Activated T-helper 1 cell treated with anti-CD3 and anti-CD28 coated beads, Interleukin-12 subunit alpha, Interleukin-12 subunit beta, Interleukin-2, Interleukin-4 antibody, amounts not matched to agents 30 ng/mL and 10 ng/mL and 1 ng/mL, durations not matched to agents 14 hours and 24 hours and 36 hours (primary cell): ENCODE measurements at regions of chr4 and their contacts with region 1.

Region 1: DNA sequence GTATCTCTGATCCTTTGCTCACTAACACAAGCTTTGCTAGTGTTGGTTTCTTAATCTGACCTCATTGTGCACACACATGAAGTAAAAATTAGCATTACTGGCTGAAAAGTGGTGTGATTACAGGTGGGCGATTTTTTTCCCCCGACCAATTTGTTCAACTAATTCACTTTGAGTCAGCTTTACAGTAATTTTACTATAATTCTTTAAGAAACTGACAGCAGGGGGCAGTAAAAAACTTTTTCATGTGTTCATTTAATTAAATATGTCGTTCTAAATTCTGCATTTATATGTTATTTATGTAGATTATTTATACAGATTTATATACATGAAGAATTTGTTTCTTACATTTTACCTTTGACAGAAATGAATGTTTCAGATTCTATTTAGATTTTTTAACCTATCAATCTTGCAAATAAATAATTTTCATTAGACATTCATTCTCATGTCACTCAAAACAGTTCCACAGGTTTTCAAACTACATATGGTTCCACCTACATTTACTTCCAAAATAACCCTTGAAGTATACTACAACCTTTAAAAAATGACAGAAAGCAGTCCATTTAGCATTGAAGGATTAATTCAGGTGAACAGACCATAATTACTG is 17.5 kb downstream of the PALLD start:
- DNase-seq: no peak
- H3K4me3 Mint-ChIP-seq: no peak overlapping the region
- H3K27ac Mint-ChIP-seq: no peak overlapping the region
- H3K4me1 Mint-ChIP-seq: peaks cover 30% of the 10 kb centered on the region
- H3K27me3 Mint-ChIP-seq: peaks cover 16% of the 10 kb centered on the region

Region 2: GRCh38 chr4:168318266-168318895 is 196.0 kb before region 1 on chr4 and contains the start of gene DDX60:
- intact Hi-C with region 1: loop called (anchors 1 kb)
- DNase-seq: peak; percentile 85
- H3K4me3 Mint-ChIP-seq: peak within 1 kb of the TSS; percentile 90
- H3K27ac Mint-ChIP-seq: peak within 1 kb of the TSS; percentile 88
- H3K4me1 Mint-ChIP-seq: peaks cover 60% of the 10 kb centered on the region
- H3K27me3 Mint-ChIP-seq: peaks cover 1% of the 10 kb centered on the region
- total RNA-seq, gene DDX60: 10.6 and 15.2 TPM in 2 replicates

Region 3: DNA sequence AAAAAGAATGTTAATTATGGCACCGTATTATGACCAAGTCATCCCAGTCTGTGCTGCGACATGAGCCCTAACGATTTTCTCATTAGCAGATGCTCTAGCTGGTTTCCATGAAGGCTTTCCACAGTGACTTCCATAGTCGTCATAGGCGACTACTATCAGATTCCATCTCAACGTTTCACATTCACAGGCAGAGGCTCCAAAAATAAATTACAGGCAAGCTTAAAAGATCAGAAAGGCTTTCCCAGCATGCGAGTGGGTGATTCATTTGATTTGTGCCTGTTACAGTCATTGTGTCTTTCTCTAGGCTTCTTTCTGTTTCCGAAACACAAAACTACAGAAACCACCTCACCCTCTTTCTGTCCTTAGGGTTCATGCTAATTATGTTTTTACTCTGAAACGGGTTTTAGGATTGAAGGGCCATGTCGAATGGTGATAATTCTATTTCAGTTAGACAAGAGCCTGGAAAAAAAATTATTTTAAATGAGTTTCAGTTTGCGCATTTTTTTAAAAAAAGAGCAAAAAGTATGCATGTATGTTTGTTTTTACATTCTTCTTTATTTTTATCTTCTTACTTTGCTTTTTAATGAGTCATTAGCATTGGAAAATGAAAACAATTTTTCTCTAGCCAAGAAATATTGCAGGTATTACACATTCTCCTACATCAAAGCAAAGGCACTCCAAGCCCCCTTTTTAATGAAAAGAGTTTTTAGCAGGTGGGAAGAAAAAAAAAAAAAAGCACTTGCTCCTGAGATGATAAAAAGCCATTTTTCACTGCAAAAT is 25.9 kb after region 1 on chr4:
- intact Hi-C with region 1: loop called (anchors 1 kb)
- DNase-seq: no peak
- H3K4me3 Mint-ChIP-seq: no peak overlapping the region
- H3K27ac Mint-ChIP-seq: no peak overlapping the region
- H3K4me1 Mint-ChIP-seq: peaks cover 5% of the 10 kb centered on the region
- H3K27me3 Mint-ChIP-seq: peaks cover 3% of the 10 kb centered on the region

Region 4: DNA sequence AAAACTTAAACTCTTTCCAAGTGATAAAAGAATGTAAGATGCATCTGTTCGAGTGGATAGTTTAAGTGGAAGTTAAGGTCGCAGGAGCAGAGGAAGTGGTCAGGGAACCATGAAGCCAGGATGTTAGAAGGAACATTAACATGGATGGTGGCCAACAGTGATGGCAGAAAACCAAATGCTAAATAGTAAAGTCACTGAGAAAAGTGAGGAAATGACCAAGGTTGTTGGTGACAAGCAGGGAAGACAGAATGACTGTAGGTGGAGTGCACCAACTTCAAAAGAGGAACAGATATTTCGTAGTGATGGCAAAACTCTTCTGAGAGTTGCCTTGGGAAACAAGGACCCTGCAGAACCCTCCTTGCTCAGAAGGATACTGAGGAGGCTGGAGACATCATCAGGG is 208.7 kb after region 1 on chr4:
- intact Hi-C with region 1: loop called (anchors 10 kb)
- DNase-seq: no peak
- H3K4me3 Mint-ChIP-seq: peak overlapping the region; percentile 25
- H3K27ac Mint-ChIP-seq: peak overlapping the region; percentile 33
- H3K4me1 Mint-ChIP-seq: peaks cover 23% of the 10 kb centered on the region
- H3K27me3 Mint-ChIP-seq: peaks cover 4% of the 10 kb centered on the region

Region 5: DNA sequence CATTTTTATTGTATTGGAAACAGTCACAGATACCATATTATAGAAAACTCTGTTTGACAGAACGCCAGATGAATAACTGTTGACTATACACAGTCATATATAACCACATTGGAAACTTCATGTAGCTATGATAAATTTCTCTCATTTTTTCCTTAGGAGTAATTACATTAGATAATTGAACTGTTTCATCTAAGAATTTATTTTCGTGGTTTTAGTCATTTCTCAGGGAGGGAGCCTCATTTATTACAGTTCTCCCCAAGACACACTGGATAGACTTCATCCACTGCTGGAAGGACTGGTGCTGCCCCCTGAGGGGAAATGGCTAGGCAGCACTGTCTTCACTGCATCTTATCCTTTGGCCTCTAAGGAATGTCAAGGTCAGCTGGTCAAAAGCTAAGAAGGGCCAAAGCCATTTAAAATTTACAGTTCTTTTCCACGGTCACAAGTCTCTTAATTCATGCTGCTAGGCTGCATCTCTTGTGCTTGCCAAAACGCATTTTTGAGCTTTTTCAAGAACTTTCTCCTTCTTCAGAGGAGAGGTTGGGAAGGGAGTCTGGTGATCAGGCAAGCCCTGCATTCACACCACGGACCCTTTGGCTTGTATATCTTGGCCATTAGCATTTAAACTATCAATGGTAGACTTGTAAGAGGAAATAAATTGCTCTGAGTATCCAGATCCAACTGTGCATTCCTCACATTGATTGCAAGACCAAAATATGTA is 350.6 kb after region 1 on chr4:
- intact Hi-C with region 1: loop called (anchors 5 kb)
- DNase-seq: no peak
- H3K4me3 Mint-ChIP-seq: no peak overlapping the region
- H3K27ac Mint-ChIP-seq: no peak overlapping the region
- H3K4me1 Mint-ChIP-seq: peaks cover 52% of the 10 kb centered on the region
- H3K27me3 Mint-ChIP-seq: no peaks in the 10 kb centered on the region

Region 6: DNA sequence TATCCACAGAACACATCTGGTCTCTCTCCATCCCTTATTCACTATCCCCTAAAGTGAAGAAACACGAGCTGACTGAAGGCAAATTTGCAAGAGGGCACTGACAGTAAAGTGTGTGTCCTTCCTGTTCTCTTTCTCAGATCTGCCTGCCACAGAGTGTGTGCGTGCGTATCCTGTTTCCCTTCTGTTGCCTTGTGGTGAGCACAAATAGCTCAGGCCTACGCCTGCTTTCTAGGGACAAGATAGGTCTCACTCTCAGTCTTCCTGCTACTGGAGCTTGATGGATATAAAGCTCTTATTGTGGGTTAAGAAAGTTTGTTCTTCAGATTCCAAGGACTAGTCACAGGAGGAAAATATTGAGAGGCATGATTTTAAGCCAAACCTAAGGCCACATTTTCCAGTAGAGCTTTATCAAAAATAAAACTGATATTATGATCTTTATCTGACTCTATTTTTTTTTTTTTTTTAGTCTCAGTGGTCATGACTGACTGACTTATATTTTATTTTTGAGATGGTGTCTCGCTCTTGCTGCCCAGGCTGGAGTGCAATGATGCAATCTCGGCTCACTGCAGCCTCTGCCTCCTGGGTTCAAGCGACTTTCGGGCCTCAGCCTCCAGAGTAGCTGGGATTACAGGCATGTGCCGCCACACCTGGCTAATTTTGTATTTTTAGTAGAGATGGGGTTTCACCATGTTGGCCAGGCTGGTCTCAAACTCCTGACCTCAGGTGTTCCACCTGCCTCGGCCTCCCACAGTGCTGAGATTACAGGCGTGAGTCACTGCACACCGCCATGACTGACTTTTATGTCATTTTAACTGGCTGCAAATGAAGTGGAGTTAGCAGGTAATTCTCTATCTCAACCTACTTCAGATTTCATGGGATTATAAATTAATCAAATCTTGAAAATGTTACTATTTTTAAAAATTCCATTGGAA is 896.8 kb after region 1 on chr4:
- intact Hi-C with region 1: loop called (anchors 10 kb)
- DNase-seq: peak; percentile 55
- H3K4me3 Mint-ChIP-seq: peak overlapping the region; percentile 46
- H3K27ac Mint-ChIP-seq: peak overlapping the region; percentile 8
- H3K4me1 Mint-ChIP-seq: peaks cover 44% of the 10 kb centered on the region
- H3K27me3 Mint-ChIP-seq: no peaks in the 10 kb centered on the region

Region 7: DNA sequence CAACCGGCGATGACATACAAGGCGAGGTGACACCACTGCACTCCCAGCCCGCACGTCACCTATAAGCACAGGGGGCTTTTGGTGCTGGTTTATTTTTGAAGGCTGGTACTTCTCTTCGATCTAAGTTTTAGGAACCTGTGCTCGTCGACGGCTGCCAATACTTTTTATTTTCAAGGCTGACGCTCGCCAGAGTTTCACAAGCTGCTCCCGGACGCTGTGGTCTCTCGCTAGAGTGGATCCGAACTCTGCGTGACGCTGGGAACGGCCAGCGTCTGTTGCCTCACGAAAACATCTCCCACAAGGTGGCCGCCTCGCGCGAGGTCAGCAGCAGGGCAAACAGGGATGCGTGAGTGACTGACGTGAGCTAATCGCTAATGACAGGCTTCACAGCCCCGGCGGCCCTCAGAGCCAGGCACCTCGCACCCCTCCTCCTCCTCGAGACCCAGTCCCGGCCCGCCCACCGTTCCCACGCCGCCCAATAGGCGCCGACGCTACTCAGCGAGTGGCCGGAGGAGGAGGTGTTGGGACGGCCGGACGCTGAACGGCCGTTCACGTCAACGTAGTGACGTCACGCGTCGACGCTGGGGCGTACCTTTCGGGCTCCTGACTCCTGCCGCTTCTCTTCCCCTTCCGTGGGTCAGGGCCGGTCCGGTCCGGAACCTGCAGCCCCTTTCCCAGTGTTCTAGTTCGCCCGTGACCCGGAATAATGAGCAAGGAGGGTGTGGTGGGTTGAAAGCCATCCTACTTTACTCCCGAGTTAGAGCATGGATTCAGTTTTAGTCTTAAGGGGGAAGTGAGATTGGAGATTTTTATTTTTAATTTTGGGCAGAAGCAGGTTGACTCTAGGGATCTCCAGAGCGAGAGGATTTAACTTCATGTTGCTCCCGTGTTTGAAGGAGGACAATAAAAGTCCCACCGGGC is 1105.9 kb after region 1 on chr4 and contains the start of gene CLCN3:
- intact Hi-C with region 1: loop called (anchors 5 kb)
- DNase-seq: peak; percentile 88
- H3K4me3 Mint-ChIP-seq: peak within 1 kb of the TSS; percentile 94
- H3K27ac Mint-ChIP-seq: peak within 1 kb of the TSS; percentile 98
- H3K4me1 Mint-ChIP-seq: peaks cover 67% of the 10 kb centered on the region
- H3K27me3 Mint-ChIP-seq: no peaks in the 10 kb centered on the region
- total RNA-seq, gene CLCN3: 29.4 and 30.2 TPM in 2 replicates